ENCODE measurements at regions of chr10 and their contacts with region 1.

Region 1: GRCh38 chr10:73597346-73597745 is 6.2 kb upstream of the USP54 start:
- DNase-seq: no peak
- ATAC-seq: no peak
- H3K4me3 ChIP-seq: no peak overlapping the region
- H3K27ac ChIP-seq: no peak overlapping the region
- H3K4me1 ChIP-seq: peaks cover 0 to 5% of the 10 kb centered on the region in 2 experiments; a peak in 2 of 5 replicates
- H3K27me3 ChIP-seq: no peaks in the 10 kb centered on the region
- CTCF ChIP-seq: no peak
- EP300 ChIP-seq: no peak
- POLR2A ChIP-seq: no peak
- RAD21 ChIP-seq: no peak

Region 2: GRCh38 chr10:73439605-73440312 is 157.6 kb before region 1 on chr10:
- CTCF ChIA-PET with region 1: no interaction called
- POLR2A ChIA-PET with region 1: no interaction called
- in situ Hi-C with region 1: no loop called
- intact Hi-C with region 1: no loop called
- DNase-seq: no peak
- ATAC-seq: no peak
- H3K4me3 ChIP-seq: no peak overlapping the region
- H3K27ac ChIP-seq: no peak overlapping the region
- H3K4me1 ChIP-seq: no peaks in the 10 kb centered on the region; a peak in 2 of 5 replicates
- H3K27me3 ChIP-seq: no peaks in the 10 kb centered on the region
- CTCF ChIP-seq: no peak
- EP300 ChIP-seq: no peak
- POLR2A ChIP-seq: no peak
- RAD21 ChIP-seq: no peak

Region 3: DNA sequence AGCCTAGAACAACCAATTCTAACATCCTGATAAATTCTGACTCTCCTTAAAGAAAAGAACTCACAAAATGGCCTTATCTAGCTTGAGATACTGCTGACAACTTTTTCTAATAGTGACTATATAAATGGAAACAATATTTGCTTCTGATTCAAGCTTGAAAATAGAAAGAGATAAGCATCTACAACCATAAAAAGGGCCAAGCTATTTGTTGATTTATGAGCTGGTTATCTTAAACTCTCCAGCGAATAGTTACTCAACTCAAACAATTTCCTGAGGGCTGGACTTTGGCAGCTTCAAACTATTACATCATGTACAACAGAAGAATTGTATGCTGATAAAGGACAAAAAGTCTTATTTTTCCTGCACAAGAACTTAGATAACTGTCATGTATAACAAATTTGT is 10.8 kb before region 1 on chr10:
- CTCF ChIA-PET with region 1: interaction called, 3 read pairs
- POLR2A ChIA-PET with region 1: interaction called, 14 read pairs
- in situ Hi-C with region 1: no loop called
- intact Hi-C with region 1: no loop called
- DNase-seq: peak in 1 of 4 experiments; percentile 28
- ATAC-seq: peak; percentile 64
- H3K4me3 ChIP-seq: no peak overlapping the region
- H3K27ac ChIP-seq: peak overlapping the region; percentile 4; the same call in 1 of the 3 replicates
- H3K4me1 ChIP-seq: peaks cover 4 to 20% of the 10 kb centered on the region in 2 experiments; a peak in 4 of 5 replicates
- H3K27me3 ChIP-seq: no peaks in the 10 kb centered on the region
- CTCF ChIP-seq: no peak
- EP300 ChIP-seq: peak; percentile 83
- POLR2A ChIP-seq: no peak
- RAD21 ChIP-seq: no peak

Measured in K562 (cell line).